Activated CD8-positive, alpha-beta T cell treated with anti-CD3 and anti-CD28 coated beads for 36 hours (primary cell): ENCODE measurements at regions of chr3 and their contacts with region 1.

Region 1: GRCh38 chr3:152183473-152183872 is 85.3 kb upstream of the MBNL1 start:
- DNase-seq: peak; percentile 82
- ATAC-seq: peak; percentile 91
- H3K4me3 Mint-ChIP-seq: peak overlapping the region; percentile 32
- H3K27ac Mint-ChIP-seq: peak overlapping the region; percentile 72
- H3K4me1 Mint-ChIP-seq: peaks cover 57% of the 10 kb centered on the region
- H3K27me3 Mint-ChIP-seq: no peaks in the 10 kb centered on the region
- CTCF ChIP-seq: peak; percentile 71

Region 2: DNA sequence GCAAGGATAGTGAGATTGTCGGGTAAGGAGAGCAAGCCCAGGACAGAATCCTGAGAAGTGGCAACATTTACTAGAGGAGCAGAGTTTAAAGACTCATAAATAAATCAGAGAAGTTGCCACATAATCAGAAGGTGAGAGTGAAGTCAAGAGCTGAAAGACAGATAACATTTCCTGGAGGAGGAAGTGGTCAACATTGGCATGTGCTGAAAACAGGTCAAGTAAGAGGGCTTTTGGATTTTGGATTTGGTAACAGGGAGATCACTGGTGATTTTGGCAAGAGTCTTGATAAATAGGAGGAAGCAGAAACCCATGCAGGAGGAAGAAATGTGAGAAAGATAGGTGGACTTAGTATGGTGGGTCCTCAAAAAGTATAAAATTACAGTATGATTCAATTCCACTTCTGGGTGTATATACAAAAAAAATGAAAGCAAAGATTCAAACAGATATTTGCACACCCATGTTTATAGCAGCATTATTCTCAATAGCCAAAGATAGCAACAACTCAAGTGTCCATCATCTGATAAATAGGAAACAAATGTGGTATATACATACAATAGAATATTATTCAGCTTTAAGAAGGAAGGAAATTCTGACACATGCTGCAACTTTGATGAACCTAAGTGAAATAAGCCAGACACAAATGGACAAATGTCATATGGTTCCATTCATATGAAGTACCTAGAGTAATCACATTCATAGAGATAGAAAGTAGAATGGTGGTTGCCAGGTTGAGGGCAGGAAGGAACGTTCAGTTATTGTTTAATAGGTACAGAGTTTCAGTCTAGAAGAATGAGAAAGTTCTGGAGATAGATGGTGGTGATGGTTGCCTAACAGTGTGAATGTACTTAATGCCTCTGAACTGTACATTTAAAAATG is 57.9 kb after region 1 on chr3:
- CTCF ChIA-PET with region 1: interaction called, 38 read pairs
- POLR2A ChIA-PET with region 1: interaction called, 3 read pairs
- intact Hi-C with region 1: no loop called
- DNase-seq: peak; percentile 54
- ATAC-seq: peak; percentile 62
- H3K4me3 Mint-ChIP-seq: peak overlapping the region; percentile 47
- H3K27ac Mint-ChIP-seq: peak overlapping the region; percentile 93
- H3K4me1 Mint-ChIP-seq: peaks cover 58% of the 10 kb centered on the region
- H3K27me3 Mint-ChIP-seq: no peaks in the 10 kb centered on the region
- CTCF ChIP-seq: no peak

Region 3: GRCh38 chr3:152287898-152288576 is 104.6 kb after region 1 on chr3:
- CTCF ChIA-PET with region 1: interaction called, 14 read pairs
- POLR2A ChIA-PET with region 1: interaction called, 3 read pairs
- intact Hi-C with region 1: no loop called
- DNase-seq: no peak
- ATAC-seq: no peak
- H3K4me3 Mint-ChIP-seq: peak overlapping the region; percentile 44
- H3K27ac Mint-ChIP-seq: peak overlapping the region; percentile 21
- H3K4me1 Mint-ChIP-seq: peaks cover 78% of the 10 kb centered on the region
- H3K27me3 Mint-ChIP-seq: no peaks in the 10 kb centered on the region
- CTCF ChIP-seq: no peak